Gastrocnemius medialis (tissue), 4 donors: ENCODE measurements at regions of chr2 and their contacts with region 1.

Region 1: GRCh38 chr2:105904938-105905337 is 160.2 kb downstream of the NCK2 start:
- DNase-seq: no peak
- ATAC-seq: no peak
- H3K4me3 ChIP-seq: no peak overlapping the region
- H3K27ac ChIP-seq: peak overlapping the region in 2 of 4 donors; percentile 83 to 91
- H3K4me1 ChIP-seq: peaks cover 46 to 48% of the 10 kb centered on the region in 2 donors
- H3K27me3 ChIP-seq: no peaks in the 10 kb centered on the region
- CTCF ChIP-seq: no peak
- POLR2A ChIP-seq: no peak

Region 2: DNA sequence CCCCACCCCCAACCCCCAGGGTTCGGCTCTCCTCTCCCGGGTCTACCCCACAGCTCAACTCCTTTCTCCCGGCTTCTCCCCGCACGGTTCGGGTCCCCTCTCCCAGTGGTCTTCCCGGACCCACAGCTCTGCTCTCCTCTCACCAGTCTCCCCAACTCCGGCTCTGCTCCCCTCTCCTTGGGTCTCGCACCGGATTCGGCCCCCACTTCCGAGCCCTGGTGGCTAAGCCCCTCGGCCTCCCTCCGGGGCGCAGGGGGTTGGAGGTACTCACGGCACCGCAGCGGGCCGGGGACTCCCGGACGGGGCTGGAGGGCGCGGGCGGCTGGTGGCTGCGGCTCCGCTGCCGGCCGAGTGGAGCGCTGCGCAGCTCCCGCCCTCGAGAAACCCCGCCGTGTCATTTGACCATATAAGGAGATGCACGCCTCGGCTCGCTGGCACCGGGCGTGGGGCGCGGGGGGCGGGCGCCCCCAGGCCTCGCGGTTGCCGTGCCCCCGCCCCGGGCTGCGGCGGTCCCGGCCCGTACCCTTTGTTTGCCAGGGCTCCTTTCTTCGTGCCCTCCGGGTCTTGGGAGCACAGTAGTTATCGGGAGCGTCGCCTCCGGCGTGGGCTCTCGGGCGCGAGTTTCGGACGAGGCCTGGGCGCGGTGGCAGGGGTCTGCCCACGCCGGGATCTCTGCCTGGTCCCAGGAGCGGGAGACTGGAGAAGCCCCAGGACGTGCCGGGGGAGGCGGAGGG is 506.1 kb before region 1 on chr2 and contains the start of gene FHL2:
- in situ Hi-C with region 1: no loop called
- intact Hi-C with region 1: loop called (anchors 10 kb)
- DNase-seq: peak; percentile 61 to 69
- ATAC-seq: peak; percentile 80 to 86
- H3K4me3 ChIP-seq: peak within 1 kb of the TSS; percentile 84 to 96 (median 86)
- H3K27ac ChIP-seq: peak within 1 kb of the TSS; percentile 84 to 96 (median 90)
- H3K4me1 ChIP-seq: peaks cover 28 to 42% of the 10 kb centered on the region in 2 donors
- H3K27me3 ChIP-seq: no peaks in the 10 kb centered on the region
- CTCF ChIP-seq: peak; percentile 44 to 58 (median 48)
- POLR2A ChIP-seq: peak; percentile 82 to 84
- total RNA-seq, gene FHL2: 14.9 to 31.8 (median 21.4) TPM

Region 3: DNA sequence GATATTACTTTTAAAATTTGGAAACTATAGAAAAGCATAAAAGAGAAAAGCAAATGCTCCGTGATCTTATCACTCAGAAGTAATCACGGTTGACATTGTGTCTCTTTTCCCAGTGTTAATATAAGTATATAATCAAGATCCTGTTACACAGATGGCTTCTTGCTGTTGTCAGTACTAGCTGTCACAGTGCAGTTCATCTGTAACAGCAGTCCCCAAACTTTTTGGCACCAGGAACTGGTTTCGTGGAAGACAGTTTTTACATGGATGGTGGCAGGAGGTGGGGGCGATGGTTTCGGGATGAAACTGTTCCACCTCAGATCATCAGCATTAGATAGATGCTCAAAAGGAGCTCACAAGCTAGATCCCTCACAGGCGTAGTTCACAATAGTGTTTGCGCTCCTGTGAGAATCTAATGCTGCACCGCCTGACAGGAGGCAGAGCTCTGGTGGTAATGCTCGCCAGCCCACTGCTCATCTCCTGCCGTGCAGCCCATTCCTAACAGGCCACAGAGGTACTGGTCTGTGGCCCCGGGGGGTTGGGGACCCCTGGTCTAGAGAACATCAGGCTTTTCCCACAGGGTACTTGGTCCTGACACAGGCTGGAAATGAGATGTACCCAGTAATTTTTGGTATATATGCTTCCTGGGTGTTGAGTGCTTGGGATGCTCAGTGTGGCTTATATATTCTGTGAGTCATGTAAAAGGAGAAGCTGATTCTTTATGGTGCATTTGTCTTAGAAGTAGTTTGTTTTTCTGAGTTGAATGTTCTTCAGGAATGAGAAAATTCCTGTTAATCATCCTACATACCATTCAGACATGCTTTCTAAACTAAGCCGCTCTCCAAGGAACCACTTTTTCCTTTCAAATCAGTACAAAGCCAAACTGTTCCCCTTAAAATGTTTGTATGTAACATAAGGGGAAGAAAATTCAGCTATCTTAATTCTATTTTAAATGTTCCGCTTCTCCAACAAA is 38.4 kb before region 1 on chr2:
- in situ Hi-C with region 1: no loop called
- intact Hi-C with region 1: loop called (anchors 5 kb)
- DNase-seq: no peak
- ATAC-seq: no peak
- H3K4me3 ChIP-seq: no peak overlapping the region
- H3K27ac ChIP-seq: peak overlapping the region in 3 of 4 donors; percentile 61 to 90 (median 69)
- H3K4me1 ChIP-seq: peaks cover 68 to 76% of the 10 kb centered on the region in 2 donors
- H3K27me3 ChIP-seq: no peaks in the 10 kb centered on the region
- CTCF ChIP-seq: no peak
- POLR2A ChIP-seq: no peak